T-cell (primary cell): ENCODE measurements at regions of chr12 and their contacts with region 1.

Region 1: DNA sequence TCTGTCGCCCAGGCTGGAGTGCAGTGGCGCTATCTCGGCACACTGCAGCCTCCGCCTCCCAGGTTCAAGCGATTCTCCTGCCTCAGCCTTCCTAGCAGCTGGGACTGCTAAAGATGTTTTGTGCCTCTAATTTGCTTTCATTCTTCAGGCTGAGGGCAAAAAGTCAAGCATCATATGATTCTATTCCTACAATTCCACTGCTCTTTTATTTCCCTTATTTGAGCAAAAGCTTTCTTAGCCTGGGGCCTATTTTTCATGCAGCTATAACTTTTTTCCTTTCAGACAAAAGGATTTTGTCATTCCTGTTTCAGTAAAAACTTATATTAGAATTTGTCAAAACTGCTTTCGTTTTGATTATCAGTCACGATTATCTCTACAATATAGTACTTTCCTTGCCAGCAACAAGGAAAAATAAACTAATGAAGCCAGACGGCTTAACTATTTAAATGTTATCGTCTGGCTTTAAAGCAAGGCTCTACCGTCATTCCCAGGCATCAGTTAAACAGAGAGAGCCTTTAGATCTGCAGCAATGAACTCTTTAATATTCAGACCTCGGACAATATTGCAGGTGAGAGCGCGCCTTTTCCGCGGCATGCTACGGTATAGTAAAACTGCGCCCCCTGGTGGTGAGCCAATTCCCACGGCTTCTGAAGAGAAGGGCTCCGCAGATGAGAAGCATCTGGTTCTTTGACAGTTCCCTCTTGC is 1.4 kb upstream of the SLC2A13 start:
- DNase-seq: peak; percentile 58 to 93 (median 83)
- ATAC-seq: peak; percentile 24 to 40 (median 28)
- H3K4me3 ChIP-seq: peak overlapping the region; percentile 38 to 49
- H3K4me3 Mint-ChIP-seq: peak overlapping the region; percentile 82 to 87 (median 82)
- H3K27ac ChIP-seq: peak overlapping the region; percentile 38
- H3K27ac Mint-ChIP-seq: peak overlapping the region; percentile 82 to 89
- H3K4me1 ChIP-seq: peaks cover 9 to 20% of the 10 kb centered on the region in 2 experiments
- H3K4me1 Mint-ChIP-seq: peaks cover 31 to 36% (median 34%) of the 10 kb centered on the region in 3 donors
- H3K27me3 ChIP-seq: peaks cover 2 to 4% of the 10 kb centered on the region in 2 experiments
- H3K27me3 Mint-ChIP-seq: peaks cover 5 to 6% of the 10 kb centered on the region in 2 donors

Region 2: DNA sequence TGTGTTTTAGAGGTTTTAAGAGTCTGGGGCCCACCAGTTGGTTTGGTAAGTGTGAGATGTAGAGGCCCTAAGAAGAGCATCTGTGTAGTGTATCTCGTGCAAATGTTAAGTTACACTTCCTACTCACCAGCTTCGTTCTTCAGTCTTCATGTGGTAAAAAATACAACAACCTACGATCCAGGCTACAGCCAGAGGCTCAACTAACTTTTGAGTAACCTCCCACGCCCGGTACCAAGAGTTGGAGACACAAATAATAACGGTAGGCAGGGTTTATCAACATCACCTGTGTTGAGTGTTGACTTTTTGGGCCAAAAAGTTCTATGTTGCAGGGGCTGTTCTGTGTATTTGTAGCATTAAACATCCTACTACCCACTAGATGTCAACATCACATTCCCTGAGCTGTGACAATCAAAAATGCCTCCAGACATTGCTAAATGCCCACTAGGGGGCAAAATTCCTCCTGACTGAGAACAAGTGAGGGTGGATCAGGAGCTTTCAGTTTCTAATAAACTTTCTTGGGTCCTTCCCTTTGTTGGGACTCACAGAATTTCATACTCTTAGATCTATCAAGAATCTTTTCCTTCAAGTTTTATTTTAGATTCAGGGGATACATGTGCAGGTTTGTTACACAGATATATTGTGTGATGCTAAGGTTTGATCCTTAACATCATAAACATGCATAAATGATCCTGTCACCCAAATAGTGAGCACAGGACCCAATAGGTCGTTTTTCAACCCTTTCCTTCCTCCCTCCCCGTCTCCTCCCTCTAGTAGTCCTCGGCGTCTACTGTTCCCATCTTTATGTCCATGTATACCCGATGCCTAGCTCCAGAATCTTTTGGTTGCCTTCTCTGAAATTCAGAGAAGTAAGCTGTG is 96.1 kb before region 1 on chr12:
- CTCF ChIA-PET with region 1: interaction called, 25 to 46 read pairs
- POLR2A ChIA-PET with region 1: interaction called in 1 of 2 experiments, 7 read pairs
- DNase-seq: peak in 31 of 35 experiments; percentile 6 to 82 (median 37)
- ATAC-seq: peak; percentile 74 to 92 (median 82)
- H3K4me3 ChIP-seq: peak overlapping the region in 1 of 2 donors; percentile 16
- H3K4me3 Mint-ChIP-seq: peak overlapping the region; percentile 47 to 66 (median 58)
- H3K27ac ChIP-seq: no peak overlapping the region
- H3K27ac Mint-ChIP-seq: no peak overlapping the region
- H3K4me1 ChIP-seq: peaks cover 0 to 5% of the 10 kb centered on the region in 2 experiments
- H3K4me1 Mint-ChIP-seq: peaks cover 11 to 21% (median 15%) of the 10 kb centered on the region in 3 donors
- H3K27me3 ChIP-seq: no peaks in the 10 kb centered on the region
- H3K27me3 Mint-ChIP-seq: no peaks in the 10 kb centered on the region

Region 3: GRCh38 chr12:40117818-40118217 is 10.6 kb after region 1 on chr12:
- CTCF ChIA-PET with region 1: interaction called, 12 to 14 read pairs
- POLR2A ChIA-PET with region 1: interaction called in 1 of 2 experiments, 3 read pairs
- DNase-seq: no peak
- ATAC-seq: no peak
- H3K4me3 ChIP-seq: no peak overlapping the region
- H3K4me3 Mint-ChIP-seq: no peak overlapping the region
- H3K27ac ChIP-seq: no peak overlapping the region
- H3K27ac Mint-ChIP-seq: no peak overlapping the region
- H3K4me1 ChIP-seq: no peaks in the 10 kb centered on the region
- H3K4me1 Mint-ChIP-seq: peaks cover 0 to 5% (median 4%) of the 10 kb centered on the region in 3 donors
- H3K27me3 ChIP-seq: no peaks in the 10 kb centered on the region
- H3K27me3 Mint-ChIP-seq: peaks cover 10 to 13% of the 10 kb centered on the region in 2 donors